Posterior vena cava (tissue), 2 donors: ENCODE measurements at regions of chr18 and their contacts with region 1.

Region 1: DNA sequence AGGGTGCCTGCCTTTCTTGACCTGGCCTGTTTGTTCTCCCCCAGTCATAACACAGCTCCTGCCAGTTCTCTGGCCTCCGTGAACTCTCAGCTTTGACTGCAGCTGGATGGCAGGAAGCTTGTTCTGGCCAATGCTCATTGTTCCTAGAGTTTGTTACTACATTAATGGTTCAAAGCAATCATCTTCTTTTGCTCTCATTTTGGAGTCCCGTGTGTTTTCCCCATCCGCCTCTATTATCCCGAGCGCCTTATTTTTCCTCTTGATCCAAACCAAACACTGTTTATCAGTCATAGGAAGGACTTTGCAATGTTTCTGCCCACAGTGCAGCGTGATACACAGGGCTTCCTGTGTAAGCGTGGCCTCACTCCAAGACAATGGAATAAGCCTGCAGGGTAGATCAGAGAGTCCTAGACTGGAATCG is 184.3 kb upstream of the APCDD1 start:
- DNase-seq: peak; percentile 83

Region 2: DNA sequence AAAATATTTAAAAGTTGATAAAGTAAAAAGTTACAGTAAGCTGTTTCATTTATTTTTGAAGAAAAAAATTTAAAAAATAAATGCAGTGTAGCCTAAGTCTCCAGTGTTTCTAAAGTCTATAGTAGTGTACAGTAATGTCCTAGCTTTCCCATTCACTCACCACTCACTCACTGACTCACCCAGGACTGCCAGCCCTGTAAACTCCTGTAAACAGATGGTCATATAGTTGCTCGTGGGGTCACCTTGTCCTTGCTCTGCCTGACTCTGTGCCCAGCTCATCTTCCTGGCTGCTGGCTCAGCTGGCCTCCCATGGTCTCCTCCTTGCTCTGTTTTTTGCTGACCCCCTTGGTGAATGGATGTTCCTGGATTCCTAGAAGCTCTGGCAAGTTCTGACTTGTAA is 176.0 kb before region 1 on chr18:
- intact Hi-C with region 1: no loop called
- DNase-seq: no peak

Region 3: DNA sequence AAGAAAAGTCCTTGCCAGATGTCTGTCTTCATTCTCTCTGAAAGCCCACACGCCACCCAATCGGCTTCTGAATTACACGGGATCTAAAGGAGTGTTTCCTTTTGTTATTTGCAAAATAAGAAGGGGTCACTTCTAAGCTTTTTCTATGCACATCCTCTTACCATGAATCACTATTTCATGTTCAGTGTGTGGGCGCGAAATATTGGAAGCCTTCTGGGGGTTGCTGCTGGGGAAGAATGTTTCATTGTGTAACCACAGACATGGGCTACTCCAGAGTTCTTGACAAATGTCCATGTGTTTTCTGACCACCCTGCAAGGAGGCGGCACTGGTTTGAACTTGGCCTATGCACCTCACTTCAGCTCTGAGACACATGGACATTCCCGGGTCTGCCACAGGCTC is 50.6 kb after region 1 on chr18:
- intact Hi-C with region 1: loop called in 1 of 2 experiments (anchors 5 kb)
- DNase-seq: no peak

Region 4: GRCh38 chr18:10378688-10379363 is 108.7 kb after region 1 on chr18:
- intact Hi-C with region 1: loop called in 1 of 2 experiments (anchors 10 kb)
- DNase-seq: no peak